AG04449 (cell line): ENCODE measurements at regions of chr20 and their contacts with region 1.

Region 1: DNA sequence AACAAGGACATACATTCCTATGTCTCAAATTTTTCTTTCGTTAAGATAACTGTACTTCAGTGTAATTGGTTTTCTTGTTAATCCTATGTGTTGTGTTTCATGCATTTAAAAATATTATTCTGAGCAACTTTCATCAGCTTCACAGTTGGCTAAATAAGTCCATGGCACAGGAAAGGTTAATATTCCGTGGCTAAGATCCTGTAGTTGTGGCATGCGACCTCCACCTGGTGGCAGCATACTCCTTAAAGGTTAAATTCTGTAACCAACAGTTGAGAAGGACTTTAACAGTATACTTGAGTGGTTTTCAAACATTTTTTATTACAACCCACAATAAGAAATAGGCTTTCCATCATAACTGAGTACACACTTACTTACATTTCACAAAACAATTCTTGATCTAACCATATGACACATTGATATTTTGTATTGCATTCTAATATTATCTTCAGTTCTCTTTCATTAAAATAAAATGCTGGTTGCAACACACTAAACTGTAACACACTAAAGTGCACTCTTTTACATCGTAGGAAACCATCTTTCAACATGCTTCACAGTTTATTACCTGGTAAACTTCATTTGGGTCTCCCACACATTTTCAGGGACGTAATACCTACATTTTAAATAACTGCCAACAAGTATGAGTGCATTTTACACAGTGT is 118.3 kb downstream of the SLX4IP start:
- DNase-seq: no peak
- H3K4me3 ChIP-seq: no peak overlapping the region
- CTCF ChIP-seq: peak; percentile 68

Region 2: GRCh38 chr20:11057624-11058023 is 504.2 kb after region 1 on chr20:
- CTCF ChIA-PET with region 1: no interaction called
- POLR2A ChIA-PET with region 1: no interaction called
- DNase-seq: no peak
- H3K4me3 ChIP-seq: no peak overlapping the region
- CTCF ChIP-seq: no peak

Region 3: DNA sequence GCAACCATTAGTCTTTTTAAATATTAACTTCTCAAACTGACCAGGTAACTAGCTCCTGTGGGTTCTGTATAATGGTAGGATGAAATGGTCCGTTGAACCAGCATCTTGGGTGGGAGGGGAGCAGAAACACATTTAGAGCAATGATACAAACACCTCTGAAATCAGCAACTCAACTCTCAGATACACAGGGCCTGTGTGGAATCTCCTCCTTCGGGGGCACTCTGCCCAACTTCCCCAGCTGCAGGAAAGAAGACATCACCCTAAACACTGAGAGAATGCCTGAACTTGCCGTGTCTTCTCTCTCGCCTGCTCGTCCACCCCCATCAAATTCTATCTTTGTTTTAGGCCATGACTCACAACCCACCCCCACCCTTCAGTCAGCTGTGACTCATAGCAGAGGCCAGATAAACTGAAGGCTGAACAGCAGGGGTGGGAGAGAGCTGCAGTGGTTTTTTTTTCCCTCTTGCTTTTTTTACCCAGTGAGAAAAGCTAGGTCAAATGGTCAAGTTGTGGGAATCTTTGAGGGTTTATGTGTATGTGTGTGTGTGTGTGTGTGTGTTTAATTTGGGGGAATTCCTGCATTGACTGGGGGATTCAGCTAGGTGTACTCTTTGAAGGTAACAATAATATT is 713.8 kb after region 1 on chr20:
- CTCF ChIA-PET with region 1: interaction called, 13 read pairs
- POLR2A ChIA-PET with region 1: no interaction called
- DNase-seq: peak; percentile 89
- H3K4me3 ChIP-seq: no peak overlapping the region
- CTCF ChIP-seq: peak; percentile 8

Region 4: DNA sequence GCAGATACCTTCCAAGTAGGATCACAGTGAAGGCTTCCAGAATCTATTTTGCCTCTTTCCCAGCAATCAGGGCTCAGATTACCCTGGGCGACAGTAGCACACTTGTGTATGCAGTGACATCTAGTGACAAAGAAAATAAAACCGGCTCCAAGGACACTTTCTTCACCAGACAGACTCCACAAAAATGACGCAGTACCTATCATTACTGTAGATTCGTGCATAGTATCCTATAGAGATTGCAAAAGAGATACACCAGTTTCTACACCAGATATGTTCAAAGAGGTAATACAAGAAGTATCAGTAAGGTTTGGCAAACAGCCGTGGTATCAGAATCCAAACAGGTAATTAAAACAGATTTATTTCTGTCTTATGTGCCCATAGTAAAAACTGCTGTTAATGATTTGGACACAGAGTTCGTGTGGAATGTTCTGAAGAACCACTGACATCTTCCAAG is 720.7 kb after region 1 on chr20:
- CTCF ChIA-PET with region 1: interaction called, 14 read pairs
- POLR2A ChIA-PET with region 1: no interaction called
- DNase-seq: peak; percentile 55
- H3K4me3 ChIP-seq: no peak overlapping the region
- CTCF ChIP-seq: peak; percentile 35

Region 5: GRCh38 chr20:11544029-11544678 is 990.7 kb after region 1 on chr20:
- CTCF ChIA-PET with region 1: interaction called, 30 read pairs
- POLR2A ChIA-PET with region 1: no interaction called
- DNase-seq: peak; percentile 12
- H3K4me3 ChIP-seq: no peak overlapping the region; the same call in 1 of the 2 replicates
- CTCF ChIP-seq: peak; percentile 36